Thyroid gland (tissue), 4 donors: ENCODE measurements at regions of chr16 and their contacts with region 1.

Region 1: DNA sequence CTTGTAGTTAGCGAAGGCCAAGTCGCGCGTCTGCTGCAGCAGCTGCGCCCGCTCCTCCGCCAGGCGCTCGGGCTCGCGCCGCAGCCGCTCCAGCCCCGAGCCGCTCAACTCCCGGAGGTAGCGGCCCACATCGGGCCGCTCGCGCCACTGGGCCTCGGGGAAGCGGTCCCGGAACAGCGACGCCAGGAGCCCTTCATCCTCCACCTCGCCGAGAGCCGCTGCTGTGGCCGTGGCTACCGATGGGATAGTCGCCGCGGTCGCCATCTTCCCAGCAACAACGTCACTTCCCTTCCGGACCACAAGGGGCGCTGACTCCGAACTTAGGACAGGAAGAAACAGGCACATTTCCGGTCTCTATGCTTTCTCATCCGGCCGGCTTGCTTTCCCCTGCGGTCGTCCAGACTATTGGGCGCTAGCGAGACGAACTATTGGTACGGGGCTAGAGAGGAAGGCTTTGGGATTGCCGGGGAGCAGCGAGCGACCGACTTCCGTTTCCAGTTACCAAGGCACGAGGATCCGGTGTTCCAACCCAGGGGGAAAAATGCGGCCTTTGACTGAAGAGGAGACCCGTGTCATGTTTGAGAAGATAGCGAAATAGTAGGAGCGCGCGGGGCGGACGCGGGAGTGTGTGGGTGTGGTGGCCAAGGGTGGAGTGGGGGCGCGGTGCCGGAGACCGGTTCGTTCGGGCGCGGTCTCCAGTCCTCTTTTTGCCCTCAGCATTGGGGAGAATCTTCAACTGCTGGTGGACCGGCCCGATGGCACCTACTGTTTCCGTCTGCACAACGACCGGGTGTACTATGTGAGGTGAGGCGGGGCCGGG is at the starts of genes COG8 and NIP7:
- DNase-seq: peak; percentile 96 to 97
- H3K4me3 ChIP-seq: peak within 1 kb of the TSS; percentile 76 to 82 (median 82)
- H3K27ac ChIP-seq: peak within 1 kb of the TSS; percentile 70 to 94 (median 85)
- H3K4me1 ChIP-seq: peaks cover 19 to 24% of the 10 kb centered on the region in 2 donors
- H3K27me3 ChIP-seq: no peaks in the 10 kb centered on the region
- CTCF ChIP-seq: peak; percentile 80 to 95 (median 88)
- POLR2A ChIP-seq: peak; percentile 15 to 76
- total RNA-seq, gene COG8: 63.3 to 84.2 (median 74.7) TPM
- total RNA-seq, gene NIP7: 9.8 to 17.5 (median 14.7) TPM

Region 2: DNA sequence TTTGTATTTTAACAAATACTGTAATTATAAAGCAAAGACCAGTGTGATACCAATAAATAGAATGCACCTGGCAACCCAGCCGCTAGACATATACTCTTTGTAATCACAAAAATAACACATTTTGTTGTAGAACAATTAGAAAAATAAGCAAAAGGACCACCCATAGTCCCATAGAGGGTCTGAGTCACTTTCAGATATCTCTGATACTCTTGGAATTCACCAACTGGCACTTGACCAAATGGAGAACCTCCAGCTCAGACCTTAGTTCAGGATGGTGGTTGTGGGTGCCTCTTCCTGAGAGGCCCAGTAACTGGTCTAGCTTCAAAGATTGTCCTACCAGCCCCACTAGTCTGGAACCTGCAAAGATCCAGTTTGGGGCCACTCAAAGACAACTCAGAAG is 47.1 kb after region 1 on chr16:
- intact Hi-C with region 1: loop called (anchors 10 kb)
- DNase-seq: no peak
- H3K4me3 ChIP-seq: no peak overlapping the region
- H3K27ac ChIP-seq: no peak overlapping the region
- H3K4me1 ChIP-seq: peaks cover 8 to 9% of the 10 kb centered on the region in 2 donors
- H3K27me3 ChIP-seq: no peaks in the 10 kb centered on the region
- CTCF ChIP-seq: no peak
- POLR2A ChIP-seq: no peak